Naive thymus-derived CD4-positive, alpha-beta T cell (primary cell): ENCODE measurements at regions of chr9 and their contacts with region 1.

Region 1: DNA sequence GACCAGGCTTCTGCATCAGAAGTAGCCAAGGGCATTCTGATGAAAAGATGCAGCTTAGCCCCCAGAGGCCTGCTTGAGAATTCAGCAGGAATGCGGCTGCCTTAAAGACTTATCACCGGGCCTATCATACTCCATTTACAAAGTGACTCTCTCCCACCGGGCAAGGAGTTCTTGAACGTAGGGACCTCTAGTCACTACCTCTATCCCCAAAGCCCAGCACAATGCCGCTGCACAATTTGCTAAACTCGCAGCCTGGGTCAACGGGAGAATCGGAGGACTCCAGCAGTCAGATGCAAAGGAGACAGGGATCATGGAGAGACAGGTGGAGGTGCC is 661 bp downstream of the PDCL start:
- DNase-seq: peak in 1 of 9 donors; percentile 11
- ATAC-seq: no peak
- H3K4me3 ChIP-seq: peak overlapping the region; percentile 97
- H3K4me3 Mint-ChIP-seq: peak overlapping the region; percentile 97 to 100 (median 99)
- H3K27ac ChIP-seq: peak overlapping the region; percentile 99
- H3K27ac Mint-ChIP-seq: peak overlapping the region; percentile 92 to 98 (median 98)
- H3K4me1 ChIP-seq: peaks cover 9 to 11% of the 10 kb centered on the region in 2 donors
- H3K4me1 Mint-ChIP-seq: peaks cover 23 to 51% (median 42%) of the 10 kb centered on the region in 7 donors
- H3K27me3 ChIP-seq: no peaks in the 10 kb centered on the region
- H3K27me3 Mint-ChIP-seq: no peaks in the 10 kb centered on the region

Region 2: DNA sequence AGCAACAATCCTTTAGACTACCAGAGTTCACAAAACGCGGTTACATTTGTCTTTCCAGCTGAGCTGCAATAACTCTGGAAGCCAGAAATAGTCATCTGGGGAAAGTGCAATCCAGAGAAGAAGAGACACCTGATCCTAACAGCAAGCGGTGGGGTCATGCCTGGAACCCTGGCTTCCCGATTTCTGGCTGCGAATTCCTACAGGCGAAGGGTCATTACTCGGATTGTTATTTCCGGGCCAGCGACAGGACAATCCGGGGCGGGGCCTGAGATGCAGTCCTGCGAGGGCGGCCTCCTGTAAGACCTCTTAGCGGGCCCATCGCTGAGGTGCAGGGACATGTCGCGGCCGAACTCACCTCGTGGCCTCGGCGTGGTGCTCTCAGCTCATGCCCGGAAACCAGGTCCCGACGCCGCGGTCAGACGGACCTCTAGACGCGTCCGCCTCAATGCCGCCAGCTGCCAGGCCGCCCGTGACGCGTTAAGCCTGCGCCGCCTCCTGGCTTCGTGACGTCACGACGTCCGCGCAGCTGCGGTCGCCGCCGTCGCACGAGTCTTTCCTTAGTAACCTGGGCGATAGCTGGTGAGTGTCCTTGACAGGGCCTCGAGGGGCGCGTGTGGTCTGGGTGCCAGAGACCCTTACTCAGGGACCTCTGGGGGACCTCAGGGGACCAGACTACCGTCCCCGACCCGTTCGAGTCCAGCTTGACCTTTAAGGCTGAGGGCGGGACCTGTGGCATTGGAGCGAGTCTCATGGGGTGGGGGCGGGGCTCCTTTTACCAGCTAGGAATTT is 563.2 kb before region 1 on chr9 and contains the starts of genes MRRF and RBM18:
- CTCF ChIA-PET with region 1: no interaction called
- POLR2A ChIA-PET with region 1: no interaction called
- intact Hi-C with region 1: loop called (anchors 1 to 10 kb)
- DNase-seq: peak; percentile 80 to 93 (median 88)
- ATAC-seq: peak; percentile 92
- H3K4me3 ChIP-seq: peak within 1 kb of the TSS; percentile 93
- H3K4me3 Mint-ChIP-seq: peak within 1 kb of the TSS; percentile 88 to 100 (median 98)
- H3K27ac ChIP-seq: peak within 1 kb of the TSS; percentile 94
- H3K27ac Mint-ChIP-seq: peak within 1 kb of the TSS; percentile 76 to 100 (median 99)
- H3K4me1 ChIP-seq: peaks cover 18 to 25% of the 10 kb centered on the region in 2 donors
- H3K4me1 Mint-ChIP-seq: peaks cover 40 to 71% (median 61%) of the 10 kb centered on the region in 7 donors
- H3K27me3 ChIP-seq: no peaks in the 10 kb centered on the region
- H3K27me3 Mint-ChIP-seq: peaks cover 0 to 2% (median 0%) of the 10 kb centered on the region in 5 donors
- total RNA-seq, gene MRRF: 28.1 to 35.8 (median 33.3) TPM
- total RNA-seq, gene RBM18: 14.2 to 22.9 (median 15.8) TPM

Region 3: DNA sequence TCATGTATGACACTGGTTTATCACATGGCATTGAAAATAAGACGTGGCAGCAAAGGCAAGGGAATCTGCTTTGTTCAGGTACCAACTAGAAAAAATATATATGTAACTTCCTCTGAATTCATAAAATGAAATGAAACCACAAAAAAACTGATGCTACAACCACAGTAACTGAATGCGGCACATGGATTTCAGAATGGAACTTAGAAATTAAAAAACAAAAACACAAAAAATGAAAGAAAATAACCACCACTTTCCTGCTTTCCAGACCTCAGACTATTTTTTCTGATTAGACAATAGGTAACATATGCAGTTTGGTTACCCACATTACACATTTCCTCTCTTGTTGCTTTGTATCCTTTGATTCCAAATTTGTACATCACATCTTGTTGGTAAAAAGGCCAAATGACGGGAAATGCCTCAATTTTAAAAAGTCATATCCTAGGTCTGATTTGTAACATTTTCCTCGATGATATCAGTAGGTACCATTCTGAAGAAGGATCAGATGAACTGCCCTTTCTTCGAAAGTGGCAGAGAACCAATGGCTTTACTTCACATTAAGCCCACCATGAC is 18.7 kb after region 1 on chr9:
- CTCF ChIA-PET with region 1: no interaction called
- POLR2A ChIA-PET with region 1: interaction called, 9 read pairs
- intact Hi-C with region 1: loop called in 1 of 2 experiments (anchors 2 kb)
- DNase-seq: peak in 7 of 9 donors; percentile 39 to 87 (median 82)
- ATAC-seq: peak; percentile 85
- H3K4me3 ChIP-seq: no peak overlapping the region
- H3K4me3 Mint-ChIP-seq: peak overlapping the region in 8 of 10 donors; percentile 19 to 75 (median 54)
- H3K27ac ChIP-seq: peak overlapping the region; percentile 66
- H3K27ac Mint-ChIP-seq: peak overlapping the region; percentile 88 to 98 (median 91)
- H3K4me1 ChIP-seq: peaks cover 0 to 17% of the 10 kb centered on the region in 2 donors
- H3K4me1 Mint-ChIP-seq: peaks cover 20 to 66% (median 41%) of the 10 kb centered on the region in 7 donors
- H3K27me3 ChIP-seq: no peaks in the 10 kb centered on the region
- H3K27me3 Mint-ChIP-seq: no peaks in the 10 kb centered on the region

Region 4: DNA sequence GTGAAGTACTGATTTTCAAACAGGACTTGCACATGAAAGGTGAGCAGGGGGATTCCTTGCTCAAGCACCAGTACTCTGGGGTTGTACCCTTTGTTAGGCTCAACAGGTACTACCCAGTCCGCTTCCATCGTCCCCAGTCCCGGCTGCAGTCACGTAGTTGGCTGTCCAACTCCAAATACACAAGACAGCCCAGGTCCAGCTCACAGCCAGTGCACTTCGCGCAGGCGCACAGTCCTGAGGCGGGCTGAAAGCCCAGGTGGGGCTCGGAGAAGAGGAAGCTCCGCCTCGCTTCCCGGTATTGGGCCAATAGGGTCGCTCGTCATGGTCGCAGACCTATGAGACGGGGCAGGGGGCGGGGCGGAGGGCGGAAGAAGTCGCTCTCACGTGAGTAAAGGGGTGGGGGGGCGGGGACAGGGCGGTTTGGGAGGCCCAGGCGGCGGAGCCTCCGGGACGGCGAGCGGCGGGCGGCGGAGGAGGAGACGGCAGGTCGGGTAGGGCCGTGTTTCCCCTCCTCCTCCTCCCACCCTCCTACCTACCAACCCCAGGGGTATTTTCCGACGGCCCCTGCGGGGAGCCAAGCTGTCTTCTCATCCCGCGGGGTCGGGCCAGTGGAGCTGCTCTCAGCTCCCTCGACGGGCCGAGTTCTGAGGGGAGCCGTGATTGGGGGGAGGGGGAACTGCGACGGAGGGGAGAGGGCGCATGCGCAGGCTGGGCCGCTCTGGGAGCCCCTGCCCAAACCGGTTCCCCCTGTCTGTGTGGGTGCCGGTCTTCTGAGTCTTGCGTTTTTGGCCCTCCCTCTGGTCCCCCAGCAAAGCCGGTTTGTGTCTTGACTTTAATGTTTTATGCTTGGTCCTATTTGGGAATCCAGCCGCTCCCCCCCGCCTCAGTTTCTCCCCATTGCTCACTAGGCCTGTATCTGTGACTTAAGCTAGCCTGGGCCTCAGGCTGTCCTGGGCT is 113.2 kb after region 1 on chr9 and contains the start of gene RABGAP1:
- CTCF ChIA-PET with region 1: no interaction called
- POLR2A ChIA-PET with region 1: interaction called, 6 read pairs
- intact Hi-C with region 1: loop called (anchors 1 to 2 kb)
- DNase-seq: peak; percentile 89 to 98 (median 94)
- ATAC-seq: peak; percentile 99
- H3K4me3 ChIP-seq: peak within 1 kb of the TSS; percentile 84
- H3K4me3 Mint-ChIP-seq: peak within 1 kb of the TSS; percentile 90 to 99 (median 96)
- H3K27ac ChIP-seq: peak within 1 kb of the TSS; percentile 89
- H3K27ac Mint-ChIP-seq: peak within 1 kb of the TSS; percentile 80 to 98 (median 94)
- H3K4me1 ChIP-seq: peaks cover 10 to 12% of the 10 kb centered on the region in 2 donors
- H3K4me1 Mint-ChIP-seq: peaks cover 18 to 47% (median 39%) of the 10 kb centered on the region in 7 donors
- H3K27me3 ChIP-seq: no peaks in the 10 kb centered on the region
- H3K27me3 Mint-ChIP-seq: no peaks in the 10 kb centered on the region
- total RNA-seq, gene RABGAP1: 33.8 to 45.7 (median 45.0) TPM